ENCODE measurements at regions of chr13 and their contacts with region 1.

Region 1: GRCh38 chr13:75372517-75372916 is 109.5 kb downstream of the TBC1D4 start:
- DNase-seq: peak in 1 of 6 donors; percentile 20
- ATAC-seq: peak; percentile 85 to 94 (median 90)
- H3K4me3 ChIP-seq: no peak overlapping the region
- H3K27ac ChIP-seq: no peak overlapping the region
- H3K4me1 ChIP-seq: peaks cover 2 to 3% (median 3%) of the 10 kb centered on the region in 3 donors
- H3K27me3 ChIP-seq: no peaks in the 10 kb centered on the region
- CTCF ChIP-seq: peak; percentile 42 to 77 (median 58)

Region 2: GRCh38 chr13:74839656-74840055 is 532.9 kb before region 1 on chr13:
- intact Hi-C with region 1: no loop called
- DNase-seq: no peak
- ATAC-seq: no peak
- H3K4me3 ChIP-seq: no peak overlapping the region
- H3K27ac ChIP-seq: no peak overlapping the region
- H3K4me1 ChIP-seq: no peaks in the 10 kb centered on the region
- H3K27me3 ChIP-seq: no peaks in the 10 kb centered on the region
- CTCF ChIP-seq: no peak

Region 3: DNA sequence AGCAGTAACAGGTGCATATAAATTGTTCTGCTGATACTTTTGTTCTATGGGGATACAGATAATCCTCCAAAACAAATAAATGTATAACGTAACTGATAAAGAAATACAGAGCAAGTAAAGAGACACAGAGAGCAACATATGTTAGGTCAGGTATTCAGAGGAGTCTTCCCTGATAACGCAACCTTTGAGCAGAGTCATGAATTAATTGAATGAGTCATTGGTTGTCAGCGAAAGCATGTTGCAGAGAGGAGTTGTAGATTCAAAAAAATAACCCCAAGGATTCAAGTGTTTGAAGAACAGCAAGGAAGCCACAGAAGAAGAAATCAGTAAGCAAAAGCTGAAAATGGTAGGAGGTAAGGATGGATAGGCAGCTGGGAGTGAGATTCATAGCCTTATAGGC is 135.7 kb before region 1 on chr13:
- intact Hi-C with region 1: no loop called
- DNase-seq: no peak
- ATAC-seq: no peak
- H3K4me3 ChIP-seq: no peak overlapping the region
- H3K27ac ChIP-seq: no peak overlapping the region
- H3K4me1 ChIP-seq: no peaks in the 10 kb centered on the region
- H3K27me3 ChIP-seq: no peaks in the 10 kb centered on the region
- CTCF ChIP-seq: no peak

Region 4: GRCh38 chr13:75482070-75482819 is 109.7 kb after region 1 on chr13 and contains the start of gene TBC1D4:
- intact Hi-C with region 1: loop called in 2 of 3 experiments (anchors 5 to 10 kb)
- DNase-seq: peak; percentile 81 to 90 (median 84)
- ATAC-seq: peak; percentile 83 to 90 (median 87)
- H3K4me3 ChIP-seq: peak within 1 kb of the TSS; percentile 66 to 93 (median 87)
- H3K27ac ChIP-seq: peak within 1 kb of the TSS; percentile 70 to 90 (median 80)
- H3K4me1 ChIP-seq: peaks cover 0 to 7% (median 0%) of the 10 kb centered on the region in 3 donors
- H3K27me3 ChIP-seq: no peaks in the 10 kb centered on the region
- CTCF ChIP-seq: peak; percentile 32 to 80 (median 69)
- total RNA-seq, gene TBC1D4: 8.2 to 19.7 (median 10.5) TPM

Measured in pancreas (tissue), 10 donors.